OCI-LY7 (cell line): ENCODE measurements at regions of chr6 and their contacts with region 1.

Region 1: GRCh38 chr6:129730477-129731165 is 20.6 kb upstream of the ARHGAP18 start:
- DNase-seq: peak; percentile 64
- H3K4me3 ChIP-seq: no peak overlapping the region
- H3K27ac ChIP-seq: no peak overlapping the region
- H3K4me1 ChIP-seq: no peaks in the 10 kb centered on the region
- CTCF ChIP-seq: peak; percentile 95

Region 2: DNA sequence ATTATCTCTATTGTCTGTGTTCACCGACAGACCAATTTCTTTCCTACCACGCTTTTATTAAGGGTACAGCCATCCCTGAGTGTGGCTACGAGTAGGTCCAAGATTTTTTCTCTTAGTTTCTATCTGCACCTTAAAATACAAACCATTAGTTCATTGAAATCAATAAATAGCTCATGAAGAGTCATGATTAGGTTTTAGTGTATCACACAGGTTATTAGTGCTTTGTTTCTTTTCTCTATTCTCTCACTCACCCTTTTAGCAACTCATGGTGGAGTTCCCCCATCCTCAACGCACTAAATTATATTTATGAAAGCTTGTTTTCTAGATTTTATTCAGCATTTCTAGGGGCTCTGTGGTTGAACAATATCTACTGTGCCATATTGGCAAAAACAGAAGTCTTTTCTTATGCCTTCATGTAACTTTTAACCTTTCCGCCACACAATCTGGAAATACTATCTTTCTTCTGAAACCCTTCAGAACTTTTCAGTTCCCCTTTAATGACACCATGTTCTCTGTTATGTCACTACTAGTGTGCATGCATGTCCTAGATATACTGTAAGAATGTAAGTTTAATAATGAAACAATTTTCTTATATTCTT is 975.9 kb before region 1 on chr6:
- CTCF ChIA-PET with region 1: no interaction called
- POLR2A ChIA-PET with region 1: no interaction called
- intact Hi-C with region 1: no loop called
- DNase-seq: no peak
- H3K4me3 ChIP-seq: no peak overlapping the region
- H3K27ac ChIP-seq: no peak overlapping the region
- H3K4me1 ChIP-seq: no peaks in the 10 kb centered on the region
- CTCF ChIP-seq: no peak

Region 3: DNA sequence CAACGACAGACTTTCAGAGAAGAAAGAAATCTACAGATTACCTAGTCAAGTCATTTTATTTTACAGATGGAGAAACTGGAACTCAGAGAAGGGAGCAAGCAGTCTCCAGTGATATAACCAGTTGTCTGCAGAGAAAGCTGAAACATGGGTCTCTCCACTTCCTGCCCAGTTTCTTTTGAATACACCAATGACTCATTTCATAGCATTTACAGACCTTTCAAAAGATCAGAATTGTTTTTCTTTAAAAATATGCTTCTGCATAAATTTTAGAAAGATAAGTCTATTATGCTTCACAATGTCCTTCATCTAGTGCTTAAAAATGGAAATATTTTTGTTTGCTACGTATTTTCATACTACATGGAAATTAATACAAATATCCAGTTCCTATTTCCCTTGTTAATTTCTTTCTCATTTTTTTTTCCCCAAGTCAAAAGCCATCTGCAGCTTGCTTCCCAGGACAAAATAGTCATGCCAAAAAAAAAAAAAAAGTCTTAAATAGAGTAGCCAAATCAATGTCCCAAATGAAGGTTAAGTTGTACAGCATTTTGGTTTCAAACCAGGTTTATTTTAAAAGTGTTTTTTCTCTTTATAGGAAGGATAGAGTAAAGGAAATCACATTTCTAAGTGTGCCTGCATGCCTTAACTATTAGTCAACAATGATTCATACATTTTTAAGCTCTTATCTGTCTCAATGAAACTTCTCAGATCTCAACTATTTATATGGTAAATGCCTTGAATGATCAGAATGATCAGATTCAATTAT is 57.6 kb before region 1 on chr6:
- CTCF ChIA-PET with region 1: no interaction called
- POLR2A ChIA-PET with region 1: interaction called, 4 read pairs
- intact Hi-C with region 1: loop called (anchors 5 kb)
- DNase-seq: no peak
- H3K4me3 ChIP-seq: no peak overlapping the region
- H3K27ac ChIP-seq: no peak overlapping the region
- H3K4me1 ChIP-seq: no peaks in the 10 kb centered on the region
- CTCF ChIP-seq: no peak

Region 4: DNA sequence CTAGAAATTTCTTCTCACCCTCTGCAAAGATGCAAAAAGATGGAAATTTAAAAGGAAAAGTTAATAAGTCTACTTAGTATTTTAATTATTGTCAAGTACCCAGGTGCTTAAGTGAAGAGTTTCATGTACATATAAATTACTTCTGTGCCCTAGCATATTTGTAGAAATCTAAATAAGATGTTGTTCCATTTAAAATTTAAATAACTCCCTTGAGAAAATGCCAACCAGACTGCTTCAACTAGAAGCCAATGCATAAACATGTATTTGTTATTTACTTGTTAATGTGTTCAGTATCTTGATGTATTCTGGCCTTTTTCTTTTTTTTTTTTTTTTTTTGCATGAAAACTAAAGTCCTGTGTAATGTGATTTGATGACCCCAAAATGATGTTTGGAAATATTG is 136.8 kb after region 1 on chr6:
- CTCF ChIA-PET with region 1: no interaction called
- POLR2A ChIA-PET with region 1: no interaction called
- intact Hi-C with region 1: no loop called
- DNase-seq: no peak
- H3K4me3 ChIP-seq: no peak overlapping the region
- H3K27ac ChIP-seq: no peak overlapping the region
- H3K4me1 ChIP-seq: no peaks in the 10 kb centered on the region
- CTCF ChIP-seq: no peak